Activated naive CD4-positive, alpha-beta T cell treated with anti-CD3 and anti-CD28 coated beads for 36 hours (primary cell): ENCODE measurements at regions of chrX and their contacts with region 1.

Region 1: DNA sequence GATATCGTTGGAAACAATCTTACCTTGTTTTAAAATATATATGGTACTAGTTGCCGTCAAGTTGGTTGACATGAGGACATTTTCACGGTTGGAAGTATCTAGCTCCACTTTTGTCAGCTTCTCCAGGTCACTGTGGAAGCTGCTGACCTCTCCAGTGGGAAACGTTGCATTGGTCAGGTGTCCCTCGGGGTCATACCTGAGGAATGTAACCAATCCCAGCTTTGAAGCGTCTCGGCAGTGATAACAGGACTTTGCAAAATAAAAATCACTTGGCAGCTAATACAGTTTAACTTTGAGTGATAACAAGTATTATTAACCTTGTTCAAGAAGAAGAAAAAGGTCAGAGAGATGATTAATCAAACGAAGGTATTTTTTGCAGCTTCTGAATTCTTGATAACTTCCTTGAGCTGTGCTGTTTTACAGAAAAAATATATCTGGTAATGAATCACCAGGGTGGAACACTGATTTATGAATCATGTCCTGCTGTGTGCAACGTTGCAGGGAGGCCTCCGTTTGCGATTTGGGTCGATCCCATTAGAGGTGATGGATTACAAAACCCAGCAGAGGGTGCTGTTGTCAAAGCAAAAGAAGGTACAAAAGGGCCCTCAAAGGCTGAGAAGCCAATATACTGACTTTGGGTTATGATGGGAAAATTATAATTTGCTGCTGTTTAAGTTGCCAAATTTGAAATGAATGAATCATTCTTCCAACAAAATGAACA is 60.1 kb downstream of the SH2D1A start:
- DNase-seq: peak; percentile 83
- H3K4me3 Mint-ChIP-seq: no peak overlapping the region
- H3K27ac Mint-ChIP-seq: no peak overlapping the region
- H3K4me1 Mint-ChIP-seq: peaks cover 17% of the 10 kb centered on the region
- H3K27me3 Mint-ChIP-seq: no peaks in the 10 kb centered on the region

Region 2: GRCh38 chrX:124211312-124211942 is 195.0 kb before region 1 on chrX:
- CTCF ChIA-PET with region 1: interaction called, 4 read pairs
- intact Hi-C with region 1: loop called (anchors 1 kb)
- DNase-seq: peak; percentile 27
- H3K4me3 Mint-ChIP-seq: no peak overlapping the region
- H3K27ac Mint-ChIP-seq: no peak overlapping the region
- H3K4me1 Mint-ChIP-seq: peaks cover 38% of the 10 kb centered on the region
- H3K27me3 Mint-ChIP-seq: no peaks in the 10 kb centered on the region

Region 3: DNA sequence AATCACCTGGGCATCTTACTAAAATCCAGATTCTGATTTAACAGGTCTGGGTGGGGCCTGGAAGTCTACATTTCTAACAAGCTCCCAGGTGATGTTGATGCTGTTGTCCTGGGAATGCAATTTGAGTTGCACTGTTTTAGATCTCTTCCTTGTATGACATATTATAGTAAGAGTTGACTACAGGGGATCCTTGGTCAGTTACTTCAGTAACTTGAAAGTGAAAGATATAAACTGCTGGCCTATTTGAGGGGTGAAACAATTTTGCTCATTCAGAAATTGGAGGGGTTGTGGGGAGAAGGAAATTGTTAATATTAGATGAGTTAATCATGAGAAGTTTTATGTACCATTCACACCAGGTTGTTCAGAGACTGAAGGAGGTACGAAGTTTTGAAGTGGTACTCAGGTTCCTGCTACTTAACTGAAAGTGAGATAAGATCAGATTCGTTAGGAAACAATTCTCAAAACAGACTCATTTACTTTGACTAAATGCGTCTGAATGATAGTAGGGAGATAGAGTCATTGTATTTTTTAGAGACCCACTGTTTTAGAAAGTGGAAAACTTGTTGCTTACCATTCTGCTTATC is 47.6 kb before region 1 on chrX:
- CTCF ChIA-PET with region 1: no interaction called
- intact Hi-C with region 1: no loop called
- DNase-seq: no peak
- H3K4me3 Mint-ChIP-seq: peak overlapping the region; percentile 77
- H3K27ac Mint-ChIP-seq: peak overlapping the region; percentile 87
- H3K4me1 Mint-ChIP-seq: peaks cover 52% of the 10 kb centered on the region
- H3K27me3 Mint-ChIP-seq: no peaks in the 10 kb centered on the region

Region 4: DNA sequence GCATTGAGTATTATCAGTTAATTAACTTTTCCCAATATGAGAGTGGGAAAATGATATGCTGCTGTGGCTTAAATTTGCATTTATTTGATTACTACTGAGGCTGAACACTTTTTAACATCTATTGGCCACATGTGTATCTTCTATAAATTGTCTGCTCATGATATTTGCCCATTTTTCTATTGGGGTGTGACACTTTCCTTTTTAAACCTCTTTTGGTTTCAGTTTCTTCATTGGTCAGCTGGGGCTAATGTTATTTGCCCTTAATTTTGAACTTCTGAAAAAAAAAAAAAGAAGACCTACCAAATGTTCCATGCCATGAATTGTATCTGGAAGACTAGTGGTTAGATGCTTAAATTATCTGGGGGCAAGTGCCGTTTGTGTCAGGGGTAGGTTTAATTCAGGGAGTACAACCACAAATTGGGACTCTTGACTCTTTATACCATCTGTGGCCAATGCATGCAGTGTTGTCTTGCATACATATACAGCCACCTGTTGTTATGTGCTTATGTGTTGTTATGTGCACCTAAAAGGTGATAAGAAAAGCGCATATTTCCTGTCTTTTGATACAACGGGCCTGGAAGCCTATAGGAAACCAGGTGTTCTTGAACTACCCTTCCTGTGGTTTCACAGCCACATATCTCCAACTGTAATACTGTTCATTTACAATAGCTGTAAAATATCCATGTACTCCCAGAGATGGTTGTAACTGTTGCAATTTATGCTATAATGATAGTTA is 11.1 kb before region 1 on chrX:
- CTCF ChIA-PET with region 1: interaction called, 15 read pairs
- intact Hi-C with region 1: no loop called
- DNase-seq: no peak
- H3K4me3 Mint-ChIP-seq: peak overlapping the region; percentile 29
- H3K27ac Mint-ChIP-seq: no peak overlapping the region
- H3K4me1 Mint-ChIP-seq: peaks cover 27% of the 10 kb centered on the region
- H3K27me3 Mint-ChIP-seq: no peaks in the 10 kb centered on the region

Region 5: GRCh38 chrX:124497386-124497785 is 90.9 kb after region 1 on chrX:
- CTCF ChIA-PET with region 1: no interaction called
- intact Hi-C with region 1: no loop called
- DNase-seq: no peak
- H3K4me3 Mint-ChIP-seq: no peak overlapping the region
- H3K27ac Mint-ChIP-seq: no peak overlapping the region
- H3K4me1 Mint-ChIP-seq: peaks cover 10% of the 10 kb centered on the region
- H3K27me3 Mint-ChIP-seq: no peaks in the 10 kb centered on the region

Region 6: DNA sequence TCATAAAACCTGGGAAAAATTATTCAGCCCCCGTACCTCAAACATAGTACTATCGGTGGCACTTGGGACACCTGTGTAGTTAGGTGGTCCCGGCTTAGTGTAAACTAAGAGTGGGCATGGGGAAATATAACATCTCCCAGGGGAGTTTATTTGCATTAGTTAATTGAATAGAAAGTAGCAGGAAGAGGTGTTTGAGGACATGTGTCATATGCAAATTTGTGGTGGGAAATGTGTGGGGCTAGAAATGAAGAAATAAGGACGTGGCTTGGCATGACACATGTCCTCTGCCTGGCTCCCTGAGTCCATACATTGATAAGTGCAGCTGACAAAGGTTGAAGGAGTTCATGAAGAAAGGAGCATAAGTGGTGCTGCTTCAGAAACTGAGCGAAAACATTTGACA is 423.5 kb after region 1 on chrX:
- CTCF ChIA-PET with region 1: no interaction called
- intact Hi-C with region 1: loop called (anchors 10 kb)
- DNase-seq: peak; percentile 29
- H3K4me3 Mint-ChIP-seq: no peak overlapping the region
- H3K27ac Mint-ChIP-seq: no peak overlapping the region
- H3K4me1 Mint-ChIP-seq: peaks cover 16% of the 10 kb centered on the region
- H3K27me3 Mint-ChIP-seq: no peaks in the 10 kb centered on the region

Region 7: DNA sequence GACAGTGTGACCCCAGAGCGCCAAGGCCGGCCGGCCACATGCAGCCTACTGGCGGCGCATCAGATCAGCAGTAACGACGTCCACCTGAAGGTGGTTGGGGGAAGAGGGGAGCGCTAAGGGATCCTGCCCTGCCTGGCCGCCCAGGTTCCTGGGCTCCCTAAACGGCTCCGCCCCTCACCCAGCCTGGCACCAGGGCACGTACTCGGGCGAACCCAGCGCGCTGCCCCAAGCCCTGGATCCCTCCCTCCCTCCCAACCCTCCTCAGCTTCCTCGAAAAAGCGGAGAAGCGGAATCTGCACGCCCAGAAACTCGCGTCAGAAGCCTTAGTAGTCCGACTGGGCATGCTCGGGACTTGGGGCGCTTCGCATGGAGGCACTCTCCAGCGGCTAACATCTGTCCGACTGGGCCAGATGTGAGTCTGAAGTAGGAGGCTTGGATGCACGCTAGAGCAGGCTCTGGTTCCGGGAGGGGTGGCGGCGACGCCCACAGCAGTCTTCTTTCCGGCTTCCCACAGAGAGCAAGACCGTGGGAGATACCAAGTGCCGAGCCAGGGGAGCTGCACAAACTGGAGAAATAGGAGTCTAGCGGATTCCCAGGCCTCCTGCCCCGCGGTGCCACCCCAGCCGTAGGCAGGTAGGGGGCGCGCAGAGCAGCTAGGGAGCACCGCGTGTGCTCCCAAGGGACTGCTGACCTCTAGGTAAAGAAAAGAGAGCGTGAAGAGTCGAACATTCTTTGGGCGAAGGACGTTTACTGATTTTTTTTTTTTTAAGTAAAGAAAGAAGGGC is 798.9 kb after region 1 on chrX:
- CTCF ChIA-PET with region 1: no interaction called
- intact Hi-C with region 1: loop called (anchors 5 kb)
- DNase-seq: peak; percentile 25
- H3K4me3 Mint-ChIP-seq: peak overlapping the region; percentile 69
- H3K27ac Mint-ChIP-seq: no peak overlapping the region
- H3K4me1 Mint-ChIP-seq: peaks cover 13% of the 10 kb centered on the region
- H3K27me3 Mint-ChIP-seq: peaks cover 34% of the 10 kb centered on the region